ENCODE measurements at regions of chr2 and their contacts with region 1.

Region 1: GRCh38 chr2:39913648-39914461 is 134.8 kb upstream of the THUMPD2 start:
- DNase-seq: no peak

Region 2: DNA sequence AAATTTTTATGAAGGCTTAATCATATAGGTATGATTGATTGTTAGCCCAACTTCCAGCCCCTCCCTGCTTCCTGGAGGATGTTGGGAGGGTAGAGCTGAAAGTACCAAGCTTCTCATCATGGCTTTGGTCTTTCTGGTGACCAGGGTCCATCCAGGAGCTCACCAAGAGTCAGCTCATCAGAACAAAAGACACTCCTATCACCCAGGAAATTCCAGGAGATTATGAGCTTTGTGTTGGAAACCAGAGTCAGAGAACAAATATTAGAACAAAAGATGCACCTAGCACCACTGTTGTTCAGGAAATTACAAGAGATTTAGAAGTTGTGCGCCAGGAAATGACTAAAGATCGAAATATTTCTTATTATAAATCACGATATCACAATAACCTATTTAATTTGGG is 14.9 kb before region 1 on chr2:
- intact Hi-C with region 1: no loop called
- DNase-seq: no peak

Region 3: DNA sequence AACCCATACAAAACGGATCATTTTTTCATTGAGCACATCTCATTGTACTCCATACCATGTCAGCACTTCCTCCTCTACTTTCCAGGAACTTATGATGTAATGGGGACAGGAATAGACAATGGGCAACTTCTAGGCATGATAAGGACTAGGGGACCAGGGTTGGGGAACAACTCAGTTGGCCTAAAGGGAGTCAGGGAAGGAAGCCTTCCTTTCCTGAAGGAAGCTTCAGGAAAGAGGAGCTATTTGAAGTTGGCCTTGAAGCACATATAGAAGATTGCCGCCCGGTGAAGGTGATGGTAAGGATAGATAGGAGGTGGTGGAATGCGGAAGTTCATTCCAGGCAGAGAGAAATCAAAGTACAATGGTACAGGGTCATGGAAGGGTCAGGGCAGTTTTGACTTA is 254.2 kb after region 1 on chr2:
- intact Hi-C with region 1: no loop called
- DNase-seq: no peak

Region 4: GRCh38 chr2:40760071-40760666 is 846.3 kb after region 1 on chr2:
- intact Hi-C with region 1: loop called (anchors 10 kb)
- DNase-seq: no peak

Region 5: GRCh38 chr2:41698678-41699422 is 1785.0 kb after region 1 on chr2:
- intact Hi-C with region 1: loop called (anchors 5 kb)
- DNase-seq: no peak